CD14-positive monocyte (primary cell): ENCODE measurements at regions of chr6 and their contacts with region 1.

Region 1: GRCh38 chr6:32785781-32786533 is 22.6 kb upstream of the HLA-DQB2 start:
- DNase-seq: peak; percentile 61 to 69 (median 62)
- H3K4me3 ChIP-seq: no peak overlapping the region
- H3K4me3 Mint-ChIP-seq: peak overlapping the region in 1 of 2 donors; percentile 52
- H3K27ac ChIP-seq: no peak overlapping the region
- H3K27ac Mint-ChIP-seq: peak overlapping the region in 2 of 7 donors; percentile 21 to 82
- H3K4me1 ChIP-seq: peaks cover 8 to 12% of the 10 kb centered on the region in 2 donors
- H3K4me1 Mint-ChIP-seq: peaks cover 8% of the 10 kb centered on the region
- H3K27me3 ChIP-seq: no peaks in the 10 kb centered on the region
- H3K27me3 Mint-ChIP-seq: peaks cover 6 to 12% (median 9%) of the 10 kb centered on the region in 3 donors
- CTCF ChIP-seq: peak; percentile 85

Region 2: DNA sequence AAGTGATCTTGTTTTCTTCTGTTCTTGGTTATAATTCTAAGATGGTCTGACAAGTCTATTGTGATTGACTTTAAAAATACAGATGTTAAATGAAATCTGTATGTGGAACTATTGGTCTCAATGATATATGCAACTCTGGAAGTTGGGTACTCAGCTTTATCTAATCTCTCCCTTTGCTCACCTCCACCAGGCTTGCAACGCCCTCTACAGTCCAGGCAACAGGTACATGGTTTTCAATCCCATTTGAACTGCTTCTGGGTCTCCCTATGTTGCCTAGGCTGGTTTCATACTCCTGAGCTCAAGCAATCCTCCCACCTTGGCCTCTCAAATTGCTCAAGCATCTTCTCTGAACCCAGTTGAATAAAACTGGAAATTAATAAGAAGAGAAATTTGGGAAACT is 93.9 kb before region 1 on chr6:
- intact Hi-C with region 1: no loop called
- DNase-seq: peak in 2 of 3 donors; percentile 21 to 63
- H3K4me3 ChIP-seq: no peak overlapping the region
- H3K4me3 Mint-ChIP-seq: no peak overlapping the region
- H3K27ac ChIP-seq: no peak overlapping the region
- H3K27ac Mint-ChIP-seq: peak overlapping the region in 1 of 7 donors; percentile 46
- H3K4me1 ChIP-seq: peaks cover 0 to 4% of the 10 kb centered on the region in 2 donors
- H3K4me1 Mint-ChIP-seq: peaks cover 13% of the 10 kb centered on the region
- H3K27me3 ChIP-seq: no peaks in the 10 kb centered on the region
- H3K27me3 Mint-ChIP-seq: peaks cover 0 to 9% (median 6%) of the 10 kb centered on the region in 3 donors
- CTCF ChIP-seq: no peak

Region 3: GRCh38 chr6:32713241-32713640 is 72.7 kb before region 1 on chr6:
- intact Hi-C with region 1: loop called (anchors 5 to 10 kb)
- DNase-seq: no peak
- H3K4me3 ChIP-seq: no peak overlapping the region
- H3K4me3 Mint-ChIP-seq: no peak overlapping the region
- H3K27ac ChIP-seq: no peak overlapping the region
- H3K27ac Mint-ChIP-seq: no peak overlapping the region
- H3K4me1 ChIP-seq: peaks cover 9 to 11% of the 10 kb centered on the region in 2 donors
- H3K4me1 Mint-ChIP-seq: peaks cover 15% of the 10 kb centered on the region
- H3K27me3 ChIP-seq: no peaks in the 10 kb centered on the region
- H3K27me3 Mint-ChIP-seq: peaks cover 3 to 5% (median 4%) of the 10 kb centered on the region in 3 donors
- CTCF ChIP-seq: no peak

Region 4: DNA sequence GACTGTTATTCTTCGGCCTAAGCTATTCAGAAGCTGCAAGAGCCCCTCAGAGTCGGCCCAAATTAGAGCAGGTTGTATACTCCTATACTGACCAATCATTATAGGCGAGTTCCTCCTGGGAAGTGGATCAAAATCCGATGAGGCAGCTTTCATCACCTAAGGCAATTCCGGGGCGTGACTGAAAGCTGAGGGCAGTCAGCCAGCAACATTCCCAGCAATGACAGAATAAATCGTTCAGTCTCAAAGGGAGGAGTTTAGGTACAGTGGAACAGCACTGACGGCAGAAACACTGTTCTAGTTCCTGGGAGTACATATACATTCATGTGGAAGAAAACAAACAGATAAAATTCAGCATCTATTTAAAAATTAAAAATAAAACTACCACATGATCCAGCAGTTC is 33.4 kb before region 1 on chr6:
- intact Hi-C with region 1: no loop called
- DNase-seq: no peak
- H3K4me3 ChIP-seq: no peak overlapping the region
- H3K4me3 Mint-ChIP-seq: no peak overlapping the region
- H3K27ac ChIP-seq: no peak overlapping the region
- H3K27ac Mint-ChIP-seq: no peak overlapping the region
- H3K4me1 ChIP-seq: no peaks in the 10 kb centered on the region
- H3K4me1 Mint-ChIP-seq: no peaks in the 10 kb centered on the region
- H3K27me3 ChIP-seq: peaks cover 0 to 6% of the 10 kb centered on the region in 2 donors
- H3K27me3 Mint-ChIP-seq: peaks cover 11 to 22% (median 17%) of the 10 kb centered on the region in 3 donors
- CTCF ChIP-seq: no peak